GM12878 (cell line): ENCODE measurements at regions of chr3 and their contacts with region 1.

Region 1: GRCh38 chr3:23590424-23591273 is 215.1 kb upstream of the UBE2E1 start:
- DNase-seq: peak; percentile 78
- ATAC-seq: peak; percentile 80
- H3K4me3 ChIP-seq: no peak overlapping the region
- H3K27ac ChIP-seq: peak overlapping the region; percentile 17; the same call in 1 of the 2 replicates
- H3K4me1 ChIP-seq: peaks cover 37% of the 10 kb centered on the region
- H3K27me3 ChIP-seq: no peaks in the 10 kb centered on the region
- CTCF ChIP-seq: no peak
- EP300 ChIP-seq: peak in 1 of 2 experiments; percentile 83; a peak in 3 of 4 replicates
- POLR2A ChIP-seq: no peak
- RAD21 ChIP-seq: peak; percentile 27

Region 2: DNA sequence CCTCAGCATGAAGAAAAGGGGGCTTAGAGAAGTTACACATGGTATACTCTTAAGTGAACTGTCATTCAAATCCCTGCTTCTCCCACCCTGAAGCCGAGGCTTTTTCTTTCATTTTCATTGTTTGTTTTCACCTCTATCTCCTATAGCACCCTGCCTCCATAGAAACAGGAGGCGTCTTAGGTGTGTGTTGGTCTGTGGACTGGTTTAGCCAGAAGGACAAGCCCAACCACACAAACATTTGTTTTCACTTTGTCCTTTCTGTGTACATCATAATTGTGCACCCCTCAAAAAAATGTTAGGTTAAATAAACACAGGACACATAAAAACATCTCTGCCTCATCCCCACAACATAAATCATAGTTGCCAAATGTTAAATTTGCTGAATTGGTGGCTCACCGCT is 460.8 kb before region 1 on chr3:
- CTCF ChIA-PET with region 1: no interaction called
- POLR2A ChIA-PET with region 1: no interaction called
- RAD21 ChIA-PET with region 1: no interaction called
- SMC1A ChIA-PET with region 1: no interaction called
- in situ Hi-C with region 1: no loop called
- intact Hi-C with region 1: no loop called
- DNase-seq: no peak
- ATAC-seq: peak; percentile 91
- H3K4me3 ChIP-seq: no peak overlapping the region
- H3K27ac ChIP-seq: no peak overlapping the region
- H3K4me1 ChIP-seq: no peaks in the 10 kb centered on the region
- H3K27me3 ChIP-seq: peaks cover 0 to 1% of the 10 kb centered on the region in 2 experiments; a peak in 1 of 4 replicates
- CTCF ChIP-seq: no peak
- EP300 ChIP-seq: no peak
- POLR2A ChIP-seq: no peak
- RAD21 ChIP-seq: no peak

Region 3: DNA sequence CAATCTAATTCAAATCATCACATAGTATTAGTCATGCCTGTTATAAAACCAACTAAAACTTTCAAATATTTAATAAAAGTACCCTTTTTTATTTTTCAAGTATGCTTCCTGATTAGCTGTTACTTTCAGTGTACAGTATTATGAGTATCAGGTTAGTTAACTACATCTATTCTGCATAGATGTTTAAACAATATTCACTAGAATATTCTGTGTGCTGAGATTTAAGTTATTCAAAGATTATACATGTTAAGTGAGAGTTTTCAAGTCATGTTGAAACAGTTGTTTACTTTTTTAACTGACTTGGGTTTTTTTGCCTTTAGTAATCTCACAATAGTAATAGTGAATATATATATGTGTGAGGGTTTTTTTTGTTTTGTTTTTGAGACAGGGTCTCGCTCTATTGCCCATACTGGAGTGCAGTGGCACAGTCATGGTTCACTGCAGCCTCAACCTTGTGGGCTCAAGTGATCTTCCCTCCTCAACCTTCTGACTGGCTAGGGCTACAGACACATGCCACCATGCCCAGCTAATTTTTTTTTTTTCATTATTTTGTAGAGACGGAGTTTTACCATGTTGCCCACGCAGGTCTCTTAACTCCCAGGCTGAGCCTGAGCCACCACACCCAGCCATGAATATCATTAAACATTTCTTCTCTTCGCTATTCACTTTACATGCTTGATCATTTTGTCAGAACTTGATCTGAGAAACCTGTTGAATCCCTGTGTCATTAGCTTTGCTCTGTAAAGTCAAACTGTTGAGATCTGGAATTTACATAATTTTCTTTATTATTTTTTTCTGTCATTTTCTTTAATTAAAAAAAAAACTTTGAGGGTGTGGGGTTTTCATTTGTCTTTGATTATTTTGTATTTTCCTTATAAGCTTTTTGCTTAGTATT is 71.1 kb before region 1 on chr3:
- CTCF ChIA-PET with region 1: interaction called, 3 read pairs
- POLR2A ChIA-PET with region 1: no interaction called
- RAD21 ChIA-PET with region 1: interaction called, 5 read pairs
- SMC1A ChIA-PET with region 1: interaction called, 10 read pairs
- in situ Hi-C with region 1: no loop called
- intact Hi-C with region 1: no loop called
- DNase-seq: peak; percentile 59
- ATAC-seq: peak; percentile 94
- H3K4me3 ChIP-seq: no peak overlapping the region
- H3K27ac ChIP-seq: no peak overlapping the region
- H3K4me1 ChIP-seq: peaks cover 5% of the 10 kb centered on the region; the same call in 1 of the 2 replicates
- H3K27me3 ChIP-seq: no peaks in the 10 kb centered on the region
- CTCF ChIP-seq: no peak
- EP300 ChIP-seq: no peak
- POLR2A ChIP-seq: no peak
- RAD21 ChIP-seq: no peak

Region 4: DNA sequence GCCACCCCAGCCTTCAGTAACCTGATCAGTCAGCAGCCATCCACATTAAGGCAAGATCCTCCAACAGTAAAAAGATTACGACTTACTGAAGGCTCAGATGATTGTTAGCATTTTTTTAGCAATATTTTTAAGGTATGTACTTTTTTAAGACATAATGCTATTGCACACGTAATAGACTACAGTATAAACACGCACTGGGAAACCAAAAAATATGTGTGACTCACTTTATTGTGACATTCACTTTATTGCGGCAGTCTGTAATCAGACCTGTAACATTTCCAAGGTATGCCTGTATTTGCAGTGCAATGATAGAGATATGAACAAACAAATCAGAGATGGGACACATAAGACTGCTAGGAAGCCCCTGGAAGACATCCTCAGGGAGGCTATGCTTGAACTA is 10.3 kb before region 1 on chr3:
- CTCF ChIA-PET with region 1: interaction called, 4 read pairs
- POLR2A ChIA-PET with region 1: interaction called, 5 read pairs
- RAD21 ChIA-PET with region 1: no interaction called
- SMC1A ChIA-PET with region 1: interaction called, 11 read pairs
- in situ Hi-C with region 1: no loop called
- intact Hi-C with region 1: no loop called
- DNase-seq: no peak
- ATAC-seq: no peak
- H3K4me3 ChIP-seq: no peak overlapping the region
- H3K27ac ChIP-seq: no peak overlapping the region
- H3K4me1 ChIP-seq: no peaks in the 10 kb centered on the region
- H3K27me3 ChIP-seq: no peaks in the 10 kb centered on the region
- CTCF ChIP-seq: no peak
- EP300 ChIP-seq: no peak
- POLR2A ChIP-seq: no peak
- RAD21 ChIP-seq: no peak

Region 5: GRCh38 chr3:23611737-23612295 is 21.2 kb after region 1 on chr3:
- CTCF ChIA-PET with region 1: interaction called, 3 read pairs
- POLR2A ChIA-PET with region 1: no interaction called
- RAD21 ChIA-PET with region 1: interaction called, 3 read pairs
- SMC1A ChIA-PET with region 1: interaction called, 24 read pairs
- in situ Hi-C with region 1: no loop called
- intact Hi-C with region 1: no loop called
- DNase-seq: no peak
- ATAC-seq: peak; percentile 14; the same call in 1 of the 3 replicates
- H3K4me3 ChIP-seq: no peak overlapping the region
- H3K27ac ChIP-seq: no peak overlapping the region
- H3K4me1 ChIP-seq: no peaks in the 10 kb centered on the region
- H3K27me3 ChIP-seq: no peaks in the 10 kb centered on the region
- CTCF ChIP-seq: no peak
- EP300 ChIP-seq: no peak
- POLR2A ChIP-seq: no peak
- RAD21 ChIP-seq: no peak

Region 6: DNA sequence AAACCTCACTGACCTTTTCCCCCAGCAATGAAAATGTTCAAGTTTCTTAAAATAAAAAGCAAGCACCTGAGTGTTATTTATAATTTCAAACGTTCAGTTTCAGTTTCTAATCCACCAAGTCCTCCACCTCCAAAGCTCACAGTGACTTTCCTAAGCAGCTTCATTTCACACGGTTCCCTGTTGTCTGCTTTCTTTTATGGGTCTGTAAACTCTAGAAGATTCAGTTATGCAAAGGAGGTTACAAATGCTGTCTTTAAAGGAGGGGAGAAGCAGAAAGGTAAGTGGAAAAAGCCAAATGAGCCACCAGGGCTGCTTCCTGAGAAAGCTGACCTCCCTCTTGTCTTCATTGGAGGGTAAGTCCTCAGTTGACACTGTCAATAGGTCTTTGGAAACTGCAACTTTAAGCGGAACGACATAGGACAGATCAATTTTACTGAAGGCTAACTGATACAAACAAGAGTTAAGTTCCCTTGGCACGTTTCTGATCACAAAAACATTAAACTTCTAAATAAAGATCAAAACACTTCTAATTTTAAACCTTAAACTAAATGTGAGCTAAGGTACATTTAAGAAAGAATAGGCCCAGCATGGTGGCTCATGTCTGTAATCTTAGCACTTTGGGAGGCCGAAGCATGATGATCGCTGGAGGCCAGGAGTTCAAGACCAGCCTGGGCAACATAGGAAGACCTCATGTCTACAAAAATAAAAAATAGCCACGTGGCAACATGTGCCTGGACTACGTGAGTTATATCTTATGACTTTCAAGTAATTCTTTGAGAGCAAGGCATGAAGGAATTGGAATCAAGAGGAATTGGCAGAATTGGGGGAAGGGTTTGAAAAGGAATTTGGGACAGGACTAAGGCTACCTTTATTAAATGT is 63.2 kb after region 1 on chr3:
- CTCF ChIA-PET with region 1: interaction called, 8 read pairs
- POLR2A ChIA-PET with region 1: interaction called, 12 read pairs
- RAD21 ChIA-PET with region 1: interaction called, 27 read pairs
- SMC1A ChIA-PET with region 1: interaction called, 24 read pairs
- in situ Hi-C with region 1: no loop called
- intact Hi-C with region 1: loop called (anchors 5 kb)
- DNase-seq: peak; percentile 97
- ATAC-seq: peak; percentile 88
- H3K4me3 ChIP-seq: peak overlapping the region; percentile 26; the same call in 1 of the 2 replicates
- H3K27ac ChIP-seq: peak overlapping the region; percentile 88
- H3K4me1 ChIP-seq: peaks cover 48% of the 10 kb centered on the region
- H3K27me3 ChIP-seq: no peaks in the 10 kb centered on the region
- CTCF ChIP-seq: no peak
- EP300 ChIP-seq: peak; percentile 29 to 92; a peak in 3 of 4 replicates
- POLR2A ChIP-seq: no peak
- RAD21 ChIP-seq: peak; percentile 24; the same call in 1 of the 2 replicates